Motor neuron (in vitro differentiated cells): ENCODE measurements at regions of chr15 and their contacts with region 1.

Region 1: DNA sequence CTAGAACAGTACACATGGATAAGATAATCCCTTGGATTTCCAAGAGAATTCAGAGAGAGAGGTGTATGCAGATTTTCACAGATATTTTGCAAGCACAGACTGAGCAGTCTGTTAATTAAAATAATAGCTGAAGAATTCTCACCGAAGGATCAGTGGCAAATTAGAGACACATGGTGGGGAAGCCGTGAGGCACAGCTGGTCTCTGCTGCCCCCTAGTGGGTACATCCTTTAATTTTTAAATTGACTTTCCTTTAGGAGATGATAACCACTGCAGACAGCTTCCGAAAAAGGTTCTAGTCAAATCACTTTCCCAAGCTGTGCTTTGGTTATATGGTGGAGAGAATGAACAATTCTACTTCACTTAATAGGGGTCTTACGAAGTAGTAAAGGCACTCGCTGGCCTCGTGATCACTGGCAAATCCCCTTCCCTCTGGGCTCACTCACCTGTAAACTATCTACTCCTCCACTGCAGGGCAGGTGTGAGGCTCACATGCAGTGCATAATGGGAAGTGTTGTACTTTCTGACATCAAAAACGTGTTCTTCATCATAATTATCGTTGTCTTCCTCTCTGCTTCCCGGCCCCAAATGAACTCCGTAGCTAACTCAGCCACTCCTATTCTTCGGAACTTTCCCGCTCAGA is 19.5 kb downstream of the MESD start:
- ATAC-seq: peak; percentile 51 to 84 (median 70)
- H3K4me3 ChIP-seq: no peak overlapping the region
- H3K27ac ChIP-seq: no peak overlapping the region
- H3K4me1 ChIP-seq: no peaks in the 10 kb centered on the region

Region 2: GRCh38 chr15:80455668-80456442 is 514.3 kb before region 1 on chr15:
- in situ Hi-C with region 1: loop called in 4 of 9 experiments (anchors 10 to 25 kb)
- ATAC-seq: peak in 7 of 8 experiments; percentile 48 to 76 (median 61)
- H3K4me3 ChIP-seq: no peak overlapping the region
- H3K27ac ChIP-seq: no peak overlapping the region
- H3K4me1 ChIP-seq: peaks cover 0 to 6% of the 10 kb centered on the region in 2 donors

Region 3: GRCh38 chr15:80567721-80568157 is 402.4 kb before region 1 on chr15:
- in situ Hi-C with region 1: loop called in 1 of 9 experiments (anchors 25 kb)
- ATAC-seq: peak; percentile 73 to 99 (median 88)
- H3K4me3 ChIP-seq: no peak overlapping the region
- H3K27ac ChIP-seq: no peak overlapping the region
- H3K4me1 ChIP-seq: no peaks in the 10 kb centered on the region

Region 4: GRCh38 chr15:80580106-80580505 is 390.0 kb before region 1 on chr15:
- in situ Hi-C with region 1: loop called in 2 of 9 experiments (anchors 25 kb)
- ATAC-seq: peak in 3 of 8 experiments; percentile 39 to 89 (median 80)
- H3K4me3 ChIP-seq: no peak overlapping the region
- H3K27ac ChIP-seq: no peak overlapping the region
- H3K4me1 ChIP-seq: no peaks in the 10 kb centered on the region

Region 5: GRCh38 chr15:80776420-80777045 is 193.6 kb before region 1 on chr15:
- in situ Hi-C with region 1: loop called in 2 of 9 experiments (anchors 25 kb)
- ATAC-seq: peak in 1 of 8 experiments; percentile 0
- H3K4me3 ChIP-seq: no peak overlapping the region
- H3K27ac ChIP-seq: no peak overlapping the region
- H3K4me1 ChIP-seq: peaks cover 11 to 13% of the 10 kb centered on the region in 2 donors

Region 6: GRCh38 chr15:81133782-81134461 is 163.8 kb after region 1 on chr15 and contains the start of gene CFAP161:
- in situ Hi-C with region 1: no loop called
- ATAC-seq: peak; percentile 100
- H3K4me3 ChIP-seq: peak within 1 kb of the TSS; percentile 32 to 52 (median 38)
- H3K27ac ChIP-seq: no peak within 1 kb of the TSS
- H3K4me1 ChIP-seq: peaks cover 0 to 2% of the 10 kb centered on the region in 2 donors
- total RNA-seq, gene CFAP161: 0.14 to 3.1 (median 0.62) TPM in 4 of 8 experiments, not detected in the others

Region 7: GRCh38 chr15:81265944-81266775 is 296.0 kb after region 1 on chr15:
- in situ Hi-C with region 1: loop called in 5 of 9 experiments (anchors 10 to 25 kb)
- ATAC-seq: peak; percentile 90 to 98 (median 96)
- H3K4me3 ChIP-seq: no peak overlapping the region
- H3K27ac ChIP-seq: no peak overlapping the region
- H3K4me1 ChIP-seq: peaks cover 0 to 3% of the 10 kb centered on the region in 2 donors